A549 (cell line): ENCODE measurements at regions of chr11 and their contacts with region 1.

Region 1: GRCh38 chr11:12900496-12900895 is 108.6 kb upstream of the RASSF10 start:
- DNase-seq: peak in 1 of 2 experiments; percentile 37
- ATAC-seq: peak; percentile 48 to 70; a peak in 4 of 6 replicates
- H3K4me3 ChIP-seq: no peak overlapping the region
- H3K27ac ChIP-seq: no peak overlapping the region
- H3K4me1 ChIP-seq: peaks cover 20% of the 10 kb centered on the region; the same call in 2 of the 3 replicates
- CTCF ChIP-seq: no peak
- EP300 ChIP-seq: no peak
- POLR2A ChIP-seq: no peak
- RAD21 ChIP-seq: no peak

Region 2: DNA sequence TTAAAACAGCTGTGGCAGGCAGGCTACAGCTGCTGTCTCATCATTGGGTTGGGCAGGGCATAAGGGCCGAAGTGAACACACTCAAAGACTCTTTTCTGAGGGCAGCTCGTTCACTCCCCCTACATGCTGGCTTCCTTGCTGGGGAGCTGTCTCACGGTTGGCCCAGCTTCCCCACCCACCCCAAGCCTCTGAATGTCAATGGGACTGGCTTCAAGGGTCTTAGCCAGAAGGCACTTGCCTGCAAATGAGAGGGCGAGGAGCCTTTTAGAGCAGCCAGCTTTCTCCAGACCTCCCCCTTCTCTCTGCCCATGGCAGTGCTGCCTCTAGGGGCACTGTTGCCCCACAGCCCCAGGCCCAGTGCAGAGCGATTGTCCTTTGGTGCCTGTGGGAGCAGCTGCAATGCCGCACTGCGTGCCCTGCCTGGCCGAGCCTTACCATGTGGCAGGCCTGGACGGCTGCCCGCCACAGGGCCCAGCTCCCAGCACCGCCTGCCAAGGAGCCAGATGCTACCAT is 14.0 kb after region 1 on chr11:
- CTCF ChIA-PET with region 1: interaction called, 18 read pairs
- POLR2A ChIA-PET with region 1: no interaction called
- DNase-seq: peak; percentile 31 to 63
- ATAC-seq: peak; percentile 90 to 96
- H3K4me3 ChIP-seq: no peak overlapping the region
- H3K27ac ChIP-seq: no peak overlapping the region
- H3K4me1 ChIP-seq: no peaks in the 10 kb centered on the region
- CTCF ChIP-seq: peak; percentile 47
- EP300 ChIP-seq: no peak
- POLR2A ChIP-seq: no peak
- RAD21 ChIP-seq: peak; percentile 33 to 36; a peak in 4 of 5 replicates